Naive thymus-derived CD4-positive, alpha-beta T cell (primary cell): ENCODE measurements at regions of chr16 and their contacts with region 1.

Region 1: DNA sequence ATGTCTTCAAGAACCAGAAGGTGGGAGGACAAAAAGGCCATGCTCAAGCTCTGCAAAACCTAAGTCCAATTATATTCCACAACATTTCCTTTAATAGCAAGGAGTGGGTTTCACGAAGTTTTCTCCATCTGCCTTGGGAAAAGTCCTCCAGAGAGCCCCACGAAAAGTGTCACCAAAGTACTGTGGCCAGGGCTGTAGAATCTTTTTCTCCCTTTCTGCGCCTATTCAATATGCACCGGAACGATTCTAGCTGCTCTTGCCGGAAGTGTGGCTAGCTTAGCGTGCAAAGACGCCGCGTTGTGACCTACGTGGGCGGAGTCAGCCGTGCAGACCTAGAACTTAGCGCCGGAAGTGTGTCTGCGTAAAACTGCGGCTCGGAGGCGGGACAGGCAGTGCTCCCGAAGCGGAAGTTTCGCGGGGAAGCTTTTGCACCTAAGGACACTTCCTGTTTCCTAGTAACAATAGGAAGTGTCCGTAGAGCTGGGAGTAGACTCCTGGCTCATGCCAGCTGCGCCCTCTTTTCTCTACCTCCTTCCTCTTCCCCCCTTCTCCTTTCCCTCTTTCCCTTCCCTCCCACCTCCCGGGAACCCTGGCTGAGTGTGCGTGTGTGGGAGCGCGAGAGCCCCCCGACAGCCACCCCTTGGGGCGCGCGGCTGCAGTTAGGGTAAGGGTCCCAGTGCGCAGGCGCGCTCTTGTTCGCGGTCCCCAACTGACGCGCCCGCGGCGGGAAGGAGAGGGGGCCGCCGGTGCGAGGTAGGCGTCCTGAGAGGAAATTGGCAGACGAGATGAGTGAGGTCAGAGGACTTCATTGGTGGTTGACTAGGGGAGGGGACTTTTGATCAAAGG is at the starts of genes ZNF646 and ZNF668:
- DNase-seq: peak; percentile 84 to 99 (median 96)
- ATAC-seq: peak; percentile 90
- H3K4me3 ChIP-seq: peak within 1 kb of the TSS; percentile 89
- H3K4me3 Mint-ChIP-seq: peak within 1 kb of the TSS; percentile 85 to 99 (median 96)
- H3K27ac ChIP-seq: peak within 1 kb of the TSS; percentile 91
- H3K27ac Mint-ChIP-seq: peak within 1 kb of the TSS; percentile 92 to 98 (median 97)
- H3K4me1 ChIP-seq: peaks cover 9 to 18% of the 10 kb centered on the region in 2 donors
- H3K4me1 Mint-ChIP-seq: peaks cover 32 to 48% (median 36%) of the 10 kb centered on the region in 7 donors
- H3K27me3 ChIP-seq: no peaks in the 10 kb centered on the region
- H3K27me3 Mint-ChIP-seq: no peaks in the 10 kb centered on the region
- total RNA-seq, gene ZNF646: 22.2 to 49.1 (median 30.4) TPM
- total RNA-seq, gene ZNF668: 10.7 to 15.2 (median 12.6) TPM

Region 2: GRCh38 chr16:30813821-30814189 is 260.4 kb before region 1 on chr16:
- CTCF ChIA-PET with region 1: no interaction called
- POLR2A ChIA-PET with region 1: interaction called, 3 read pairs
- intact Hi-C with region 1: loop called in 1 of 2 experiments (anchors 5 kb)
- DNase-seq: no peak
- ATAC-seq: no peak
- H3K4me3 ChIP-seq: peak overlapping the region; percentile 70
- H3K4me3 Mint-ChIP-seq: peak overlapping the region; percentile 84 to 92 (median 86)
- H3K27ac ChIP-seq: peak overlapping the region; percentile 73
- H3K27ac Mint-ChIP-seq: peak overlapping the region; percentile 61 to 98 (median 88)
- H3K4me1 ChIP-seq: peaks cover 7% of the 10 kb centered on the region in 2 donors
- H3K4me1 Mint-ChIP-seq: peaks cover 5 to 15% (median 13%) of the 10 kb centered on the region in 7 donors
- H3K27me3 ChIP-seq: no peaks in the 10 kb centered on the region
- H3K27me3 Mint-ChIP-seq: peaks cover 0 to 3% (median 0%) of the 10 kb centered on the region in 5 donors

Region 3: DNA sequence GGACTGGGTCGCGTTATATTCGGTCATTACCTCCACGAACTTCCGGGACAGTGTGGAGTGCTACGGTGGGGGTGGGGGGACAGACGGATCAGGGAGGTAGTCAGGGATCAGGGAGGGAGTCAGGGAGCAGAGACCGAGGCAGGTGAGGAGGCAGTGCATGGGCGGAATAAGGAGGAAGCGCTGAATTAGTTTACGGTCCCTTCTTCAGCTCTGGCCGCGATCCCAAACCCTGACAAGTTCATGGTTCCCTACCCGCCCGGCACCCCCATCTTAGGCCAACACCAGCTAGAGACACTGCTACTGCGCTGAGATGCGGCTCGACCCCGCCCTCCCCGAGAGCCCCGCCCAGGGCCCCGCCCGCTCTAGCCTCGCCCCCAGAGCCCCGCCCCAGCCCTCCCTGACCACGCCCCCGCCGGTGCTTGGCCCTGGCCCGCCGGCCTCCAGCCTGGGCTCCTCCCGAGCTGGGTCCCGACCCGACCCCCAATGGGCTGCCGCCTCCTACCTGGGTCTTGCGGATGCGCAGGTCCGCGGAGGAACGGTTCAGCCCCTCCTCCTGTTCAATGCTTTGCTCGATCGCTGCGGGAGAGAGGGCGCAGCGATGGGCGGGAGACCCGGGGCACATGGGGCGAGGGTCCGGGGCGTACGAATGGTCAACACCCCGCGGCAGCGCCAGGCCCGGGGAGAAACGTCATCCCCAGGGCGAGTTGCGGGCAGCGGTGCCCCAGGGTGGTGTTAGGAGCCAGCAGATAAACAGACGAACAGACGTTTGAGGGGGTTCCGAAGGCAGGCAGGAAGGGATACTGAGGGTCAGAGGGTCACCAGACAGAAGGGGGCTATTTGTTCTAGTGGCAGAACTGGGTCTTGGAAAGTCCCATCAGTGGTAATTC is 76.9 kb before region 1 on chr16:
- CTCF ChIA-PET with region 1: no interaction called
- POLR2A ChIA-PET with region 1: no interaction called
- intact Hi-C with region 1: loop called (anchors 1 to 2 kb)
- DNase-seq: peak; percentile 45 to 80 (median 66)
- ATAC-seq: peak; percentile 99
- H3K4me3 ChIP-seq: peak overlapping the region; percentile 78
- H3K4me3 Mint-ChIP-seq: peak overlapping the region; percentile 66 to 90 (median 82)
- H3K27ac ChIP-seq: peak overlapping the region; percentile 61
- H3K27ac Mint-ChIP-seq: peak overlapping the region in 7 of 9 donors; percentile 58 to 87 (median 74)
- H3K4me1 ChIP-seq: peaks cover 5 to 11% of the 10 kb centered on the region in 2 donors
- H3K4me1 Mint-ChIP-seq: peaks cover 0 to 9% (median 6%) of the 10 kb centered on the region in 7 donors
- H3K27me3 ChIP-seq: no peaks in the 10 kb centered on the region
- H3K27me3 Mint-ChIP-seq: peaks cover 0 to 3% (median 0%) of the 10 kb centered on the region in 5 donors

Region 4: DNA sequence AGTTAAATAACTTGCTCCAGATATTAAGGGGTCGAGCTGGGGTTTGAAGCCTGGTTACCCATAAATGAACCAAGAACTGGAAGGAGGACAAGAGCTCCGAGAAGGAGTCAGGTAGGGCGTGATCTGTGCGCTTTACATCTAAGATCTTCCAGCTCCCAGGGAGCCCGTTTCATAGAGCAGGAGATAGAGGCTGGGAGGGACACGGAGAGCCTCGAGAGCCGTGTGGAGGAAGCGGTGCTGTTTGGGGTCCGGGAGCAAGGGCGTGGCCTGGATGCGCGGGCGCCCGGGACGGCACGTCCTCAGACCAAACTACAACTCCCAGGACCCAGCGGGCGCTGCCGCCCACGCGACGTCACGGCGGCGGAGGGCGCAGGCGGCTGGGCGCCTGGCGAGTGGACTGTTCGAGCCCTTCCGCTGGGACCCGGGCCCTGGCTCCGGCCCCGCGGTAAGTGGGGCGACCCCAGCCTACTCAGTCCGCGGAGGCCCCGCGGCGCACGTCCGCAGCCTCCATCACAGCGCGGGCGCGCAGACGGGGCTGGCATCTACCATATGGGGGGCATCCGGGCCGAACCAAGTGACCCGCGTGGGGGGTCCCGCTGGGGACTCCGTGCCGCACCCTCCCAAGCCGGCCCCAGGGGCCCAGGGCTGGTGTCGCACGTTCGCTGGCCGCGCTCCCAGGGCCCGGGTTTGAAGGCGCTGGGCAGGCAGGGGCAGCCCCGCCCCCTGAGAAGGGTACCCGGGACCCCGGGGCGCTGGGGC is 34.0 kb after region 1 on chr16 and contains the start of gene BCKDK:
- CTCF ChIA-PET with region 1: no interaction called
- POLR2A ChIA-PET with region 1: interaction called, 3 read pairs
- intact Hi-C with region 1: loop called (anchors 2 kb)
- DNase-seq: peak; percentile 31 to 84 (median 39)
- ATAC-seq: peak; percentile 82
- H3K4me3 ChIP-seq: peak within 1 kb of the TSS; percentile 74
- H3K4me3 Mint-ChIP-seq: peak within 1 kb of the TSS; percentile 77 to 91 (median 85)
- H3K27ac ChIP-seq: peak within 1 kb of the TSS; percentile 82
- H3K27ac Mint-ChIP-seq: peak within 1 kb of the TSS; percentile 58 to 88 (median 84)
- H3K4me1 ChIP-seq: peaks cover 4 to 16% of the 10 kb centered on the region in 2 donors
- H3K4me1 Mint-ChIP-seq: peaks cover 10 to 32% (median 19%) of the 10 kb centered on the region in 7 donors
- H3K27me3 ChIP-seq: no peaks in the 10 kb centered on the region
- H3K27me3 Mint-ChIP-seq: no peaks in the 10 kb centered on the region
- total RNA-seq, gene BCKDK: 10.3 to 30.8 (median 20.8) TPM

Region 5: GRCh38 chr16:31179747-31180459 is 105.7 kb after region 1 on chr16 and contains the start of gene FUS:
- CTCF ChIA-PET with region 1: interaction called, 3 read pairs
- POLR2A ChIA-PET with region 1: interaction called, 49 read pairs
- intact Hi-C with region 1: loop called (anchors 1 kb)
- DNase-seq: peak; percentile 88 to 97 (median 95)
- ATAC-seq: peak; percentile 87
- H3K4me3 ChIP-seq: peak within 1 kb of the TSS; percentile 76
- H3K4me3 Mint-ChIP-seq: peak within 1 kb of the TSS; percentile 92 to 99 (median 96)
- H3K27ac ChIP-seq: peak within 1 kb of the TSS; percentile 90
- H3K27ac Mint-ChIP-seq: peak within 1 kb of the TSS; percentile 96 to 100 (median 99)
- H3K4me1 ChIP-seq: peaks cover 56% of the 10 kb centered on the region in 2 donors
- H3K4me1 Mint-ChIP-seq: peaks cover 49 to 72% (median 56%) of the 10 kb centered on the region in 7 donors
- H3K27me3 ChIP-seq: no peaks in the 10 kb centered on the region
- H3K27me3 Mint-ChIP-seq: peaks cover 0 to 3% (median 0%) of the 10 kb centered on the region in 5 donors
- total RNA-seq, gene FUS: 597 to 956 (median 714) TPM

Region 6: GRCh38 chr16:31873556-31874365 is 799.6 kb after region 1 on chr16 and contains the start of gene ZNF267:
- CTCF ChIA-PET with region 1: interaction called, 3 read pairs
- POLR2A ChIA-PET with region 1: interaction called, 9 read pairs
- intact Hi-C with region 1: loop called in 1 of 2 experiments (anchors 1 kb)
- DNase-seq: peak; percentile 79 to 96 (median 93)
- ATAC-seq: peak; percentile 79
- H3K4me3 ChIP-seq: peak within 1 kb of the TSS; percentile 90
- H3K4me3 Mint-ChIP-seq: peak within 1 kb of the TSS; percentile 89 to 99 (median 94)
- H3K27ac ChIP-seq: peak within 1 kb of the TSS; percentile 94
- H3K27ac Mint-ChIP-seq: peak within 1 kb of the TSS; percentile 85 to 98 (median 96)
- H3K4me1 ChIP-seq: peaks cover 66 to 72% of the 10 kb centered on the region in 2 donors
- H3K4me1 Mint-ChIP-seq: peaks cover 54 to 95% (median 84%) of the 10 kb centered on the region in 7 donors
- H3K27me3 ChIP-seq: no peaks in the 10 kb centered on the region
- H3K27me3 Mint-ChIP-seq: no peaks in the 10 kb centered on the region
- total RNA-seq, gene ZNF267: 34.8 to 74.9 (median 48.8) TPM